Esophagus muscularis mucosa (tissue), 4 donors: ENCODE measurements at regions of chr9 and their contacts with region 1.

Region 1: GRCh38 chr9:35882263-35882848 is 12.2 kb upstream of the OR13J1 start:
- DNase-seq: no peak
- H3K4me3 ChIP-seq: no peak overlapping the region
- H3K27ac ChIP-seq: no peak overlapping the region
- H3K4me1 ChIP-seq: no peaks in the 10 kb centered on the region
- H3K27me3 ChIP-seq: no peaks in the 10 kb centered on the region
- CTCF ChIP-seq: peak; percentile 94 to 98 (median 95)
- EP300 ChIP-seq: no peak
- POLR2A ChIP-seq: no peak

Region 2: GRCh38 chr9:35790385-35791296 is 91.7 kb before region 1 on chr9:
- intact Hi-C with region 1: loop called (anchors 2 kb)
- DNase-seq: no peak
- H3K4me3 ChIP-seq: peak overlapping the region; percentile 68 to 82 (median 68)
- H3K27ac ChIP-seq: peak overlapping the region; percentile 85 to 91 (median 87)
- H3K4me1 ChIP-seq: peaks cover 28 to 54% (median 53%) of the 10 kb centered on the region in 4 donors
- H3K27me3 ChIP-seq: no peaks in the 10 kb centered on the region
- CTCF ChIP-seq: peak; percentile 83 to 91 (median 85)
- EP300 ChIP-seq: no peak
- POLR2A ChIP-seq: no peak

Region 3: GRCh38 chr9:35826071-35826701 is 56.2 kb before region 1 on chr9:
- intact Hi-C with region 1: loop called (anchors 2 kb)
- DNase-seq: no peak
- H3K4me3 ChIP-seq: no peak overlapping the region
- H3K27ac ChIP-seq: no peak overlapping the region
- H3K4me1 ChIP-seq: peaks cover 20 to 42% (median 32%) of the 10 kb centered on the region in 4 donors
- H3K27me3 ChIP-seq: no peaks in the 10 kb centered on the region
- CTCF ChIP-seq: peak; percentile 77 to 86 (median 86)
- EP300 ChIP-seq: no peak
- POLR2A ChIP-seq: no peak

Region 4: DNA sequence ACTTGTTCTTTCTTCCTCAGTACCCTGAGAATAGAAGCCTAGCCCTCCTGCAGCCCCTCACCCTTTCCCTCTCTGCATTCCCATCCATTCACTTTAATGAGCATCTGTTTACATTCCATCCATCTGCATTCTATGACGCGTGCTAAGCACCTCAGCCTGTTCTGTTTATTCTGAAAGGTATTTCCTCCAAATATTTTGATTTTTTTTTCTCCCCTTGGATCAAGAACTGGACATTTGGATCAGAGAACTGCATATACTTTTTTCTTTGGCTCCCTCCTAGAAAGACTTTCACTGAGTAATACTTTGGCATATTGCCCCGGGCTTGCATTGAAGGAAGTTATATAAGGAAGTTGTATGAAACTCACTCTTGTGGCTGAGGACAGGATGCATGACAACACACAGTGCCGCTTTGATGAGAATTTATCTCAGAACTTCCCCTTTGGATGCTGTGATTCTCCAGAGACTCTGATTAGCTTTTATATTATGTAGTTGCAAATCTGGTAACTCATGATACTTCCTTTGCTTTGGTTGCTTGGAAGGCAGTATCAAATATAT is 37.6 kb before region 1 on chr9:
- intact Hi-C with region 1: loop called (anchors 5 kb)
- DNase-seq: no peak
- H3K4me3 ChIP-seq: no peak overlapping the region
- H3K27ac ChIP-seq: peak overlapping the region; percentile 75 to 84 (median 80)
- H3K4me1 ChIP-seq: peaks cover 34 to 65% (median 57%) of the 10 kb centered on the region in 4 donors
- H3K27me3 ChIP-seq: no peaks in the 10 kb centered on the region
- CTCF ChIP-seq: no peak
- EP300 ChIP-seq: no peak
- POLR2A ChIP-seq: no peak

Region 5: GRCh38 chr9:35856882-35857281 is 25.5 kb before region 1 on chr9:
- intact Hi-C with region 1: no loop called
- DNase-seq: peak; percentile 86
- H3K4me3 ChIP-seq: no peak overlapping the region
- H3K27ac ChIP-seq: no peak overlapping the region
- H3K4me1 ChIP-seq: peaks cover 3 to 13% (median 10%) of the 10 kb centered on the region in 4 donors
- H3K27me3 ChIP-seq: no peaks in the 10 kb centered on the region
- CTCF ChIP-seq: no peak
- EP300 ChIP-seq: no peak
- POLR2A ChIP-seq: no peak